Left ventricle myocardium inferior (tissue), 1 donor: ENCODE measurements at regions of chr1 and their contacts with region 1.

Region 1: DNA sequence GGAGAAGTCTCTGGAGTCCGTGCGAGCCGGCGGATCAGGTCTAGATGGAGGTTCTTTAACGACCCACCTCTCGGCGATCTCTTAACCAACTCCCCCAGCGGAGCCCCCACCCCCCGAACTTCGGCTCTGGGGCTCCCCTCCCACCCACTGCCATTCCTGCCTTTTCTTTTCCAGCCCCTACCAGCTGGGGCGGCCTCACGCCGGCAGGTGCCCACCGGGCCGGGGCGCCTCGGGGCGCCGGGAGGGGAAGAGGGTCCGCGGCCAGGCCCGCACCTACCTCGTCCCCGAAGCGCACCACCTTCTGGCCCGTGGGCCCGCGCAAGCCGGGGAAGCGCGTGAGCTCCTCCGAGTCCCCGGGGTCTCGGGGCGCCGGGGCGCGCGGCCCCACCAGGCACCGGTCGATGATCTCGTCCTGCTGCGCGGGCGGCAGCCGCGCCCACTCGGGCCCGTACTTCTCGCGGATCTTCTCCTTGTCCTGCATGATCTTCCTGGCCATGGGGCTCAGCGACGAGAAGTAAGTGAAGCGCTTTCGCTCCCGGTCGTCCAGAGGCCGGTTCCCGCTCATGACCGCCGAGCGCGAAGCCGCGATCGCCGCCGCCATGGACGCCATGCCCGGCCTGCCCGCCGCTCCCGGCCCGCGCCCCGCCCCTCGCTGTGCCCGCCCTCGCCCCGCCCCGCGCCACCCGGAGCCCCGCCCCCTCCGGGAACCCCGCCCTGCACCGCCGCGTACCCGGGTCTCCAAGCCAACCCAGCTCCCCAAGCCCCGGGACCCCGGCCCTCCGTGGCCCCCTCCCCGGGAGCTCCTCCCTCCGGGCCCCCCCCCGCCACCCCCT is at the start of gene C1orf198:
- DNase-seq: peak; percentile 79
- H3K4me3 ChIP-seq: peak within 1 kb of the TSS; percentile 94
- H3K27ac ChIP-seq: peak within 1 kb of the TSS; percentile 92
- H3K4me1 ChIP-seq: peaks cover 72% of the 10 kb centered on the region
- H3K27me3 ChIP-seq: no peaks in the 10 kb centered on the region
- CTCF ChIP-seq: no peak
- total RNA-seq, gene C1orf198: 32.7 TPM

Region 2: GRCh38 chr1:230818367-230818766 is 49.8 kb before region 1 on chr1:
- intact Hi-C with region 1: loop called (anchors 10 kb)
- DNase-seq: no peak
- H3K4me3 ChIP-seq: no peak overlapping the region
- H3K27ac ChIP-seq: no peak overlapping the region
- H3K4me1 ChIP-seq: peaks cover 55% of the 10 kb centered on the region
- H3K27me3 ChIP-seq: no peaks in the 10 kb centered on the region
- CTCF ChIP-seq: no peak

Region 3: GRCh38 chr1:231040019-231040799 is 172.1 kb after region 1 on chr1 and contains the start of gene FAM89A:
- intact Hi-C with region 1: no loop called
- DNase-seq: peak; percentile 68
- H3K4me3 ChIP-seq: peak within 1 kb of the TSS; percentile 81
- H3K27ac ChIP-seq: peak within 1 kb of the TSS; percentile 83
- H3K4me1 ChIP-seq: peaks cover 30% of the 10 kb centered on the region
- H3K27me3 ChIP-seq: peaks cover 33% of the 10 kb centered on the region
- CTCF ChIP-seq: no peak
- total RNA-seq, gene FAM89A: 6.5 TPM